ENCODE measurements at regions of chr9 and their contacts with region 1.

Region 1: GRCh38 chr9:96217754-96218693 is 84.0 kb downstream of the HSD17B3 start:
- DNase-seq: peak; percentile 79
- H3K4me3 ChIP-seq: peak overlapping the region; percentile 39
- H3K27ac ChIP-seq: peak overlapping the region; percentile 44
- H3K4me1 ChIP-seq: peaks cover 8% of the 10 kb centered on the region
- H3K27me3 ChIP-seq: no peaks in the 10 kb centered on the region
- CTCF ChIP-seq: peak; percentile 98

Region 2: DNA sequence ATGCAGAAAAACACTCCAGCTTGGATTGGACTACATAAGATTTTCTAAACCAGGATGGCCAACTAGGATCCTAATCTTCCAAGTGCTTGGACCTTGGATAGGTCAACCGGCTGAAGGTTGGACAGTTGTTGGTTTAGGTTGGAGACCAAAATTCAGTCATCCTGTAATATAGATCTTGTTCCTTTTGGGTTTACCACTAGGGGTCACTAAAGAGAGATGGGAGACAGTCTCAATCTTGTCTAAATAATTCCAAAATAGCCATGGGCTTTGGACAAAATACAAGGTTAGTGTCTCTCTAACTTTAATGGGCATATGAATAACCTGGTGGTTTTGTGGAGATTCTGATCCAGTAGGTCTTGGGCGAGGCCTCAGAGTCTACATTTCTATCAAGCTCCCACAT is 491.3 kb before region 1 on chr9:
- intact Hi-C with region 1: loop called (anchors 5 kb)
- DNase-seq: no peak
- H3K4me3 ChIP-seq: no peak overlapping the region
- H3K27ac ChIP-seq: no peak overlapping the region
- H3K4me1 ChIP-seq: peaks cover 3% of the 10 kb centered on the region
- H3K27me3 ChIP-seq: no peaks in the 10 kb centered on the region
- CTCF ChIP-seq: peak; percentile 54

Region 3: DNA sequence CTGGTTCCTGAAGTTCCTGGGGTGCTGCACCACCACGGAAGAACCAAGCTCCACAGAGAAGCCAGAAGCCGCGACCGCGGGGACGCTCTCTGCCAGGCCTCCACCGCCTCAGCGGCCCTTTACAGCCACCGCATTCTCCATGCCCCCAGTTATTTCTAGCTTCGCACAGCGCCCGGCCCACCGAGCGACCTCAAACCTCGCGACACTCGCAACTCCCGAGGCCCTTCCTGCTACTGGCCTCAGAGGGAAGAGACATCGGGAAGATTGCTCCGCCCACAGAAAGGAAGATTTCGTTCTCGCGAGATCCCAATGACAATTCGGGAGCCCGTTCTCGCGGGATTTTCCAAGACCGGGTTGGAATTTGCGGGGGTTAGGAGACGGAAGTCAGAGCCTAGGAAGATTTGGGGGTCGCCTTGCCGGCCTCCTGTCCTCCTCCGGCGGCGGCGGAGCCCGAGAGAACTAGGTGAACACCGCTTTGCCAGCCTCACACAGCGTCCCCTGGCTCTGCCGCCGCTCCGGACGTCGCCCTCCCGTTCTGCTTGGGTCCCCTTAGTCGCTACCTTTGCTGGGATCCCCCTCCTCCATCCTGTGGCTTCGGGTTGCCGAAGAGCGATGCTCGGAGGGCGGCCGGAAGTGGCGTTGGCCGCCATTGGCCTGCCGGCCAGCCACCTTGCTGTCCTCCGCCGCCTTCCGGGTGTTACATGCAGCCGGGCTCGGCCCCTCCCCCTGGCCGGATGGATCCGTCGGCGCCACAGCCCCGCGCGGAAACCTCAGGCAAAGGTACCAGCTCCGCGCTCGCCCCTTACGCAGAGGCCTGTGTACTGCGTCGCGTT is 342.5 kb before region 1 on chr9 and contains the start of gene ERCC6L2:
- intact Hi-C with region 1: no loop called
- DNase-seq: peak; percentile 95
- H3K4me3 ChIP-seq: no peak within 1 kb of the TSS
- H3K27ac ChIP-seq: no peak within 1 kb of the TSS
- H3K4me1 ChIP-seq: peaks cover 5% of the 10 kb centered on the region
- H3K27me3 ChIP-seq: no peaks in the 10 kb centered on the region
- CTCF ChIP-seq: no peak
- total RNA-seq, gene ERCC6L2: 21.5 to 36.4 TPM

Region 4: DNA sequence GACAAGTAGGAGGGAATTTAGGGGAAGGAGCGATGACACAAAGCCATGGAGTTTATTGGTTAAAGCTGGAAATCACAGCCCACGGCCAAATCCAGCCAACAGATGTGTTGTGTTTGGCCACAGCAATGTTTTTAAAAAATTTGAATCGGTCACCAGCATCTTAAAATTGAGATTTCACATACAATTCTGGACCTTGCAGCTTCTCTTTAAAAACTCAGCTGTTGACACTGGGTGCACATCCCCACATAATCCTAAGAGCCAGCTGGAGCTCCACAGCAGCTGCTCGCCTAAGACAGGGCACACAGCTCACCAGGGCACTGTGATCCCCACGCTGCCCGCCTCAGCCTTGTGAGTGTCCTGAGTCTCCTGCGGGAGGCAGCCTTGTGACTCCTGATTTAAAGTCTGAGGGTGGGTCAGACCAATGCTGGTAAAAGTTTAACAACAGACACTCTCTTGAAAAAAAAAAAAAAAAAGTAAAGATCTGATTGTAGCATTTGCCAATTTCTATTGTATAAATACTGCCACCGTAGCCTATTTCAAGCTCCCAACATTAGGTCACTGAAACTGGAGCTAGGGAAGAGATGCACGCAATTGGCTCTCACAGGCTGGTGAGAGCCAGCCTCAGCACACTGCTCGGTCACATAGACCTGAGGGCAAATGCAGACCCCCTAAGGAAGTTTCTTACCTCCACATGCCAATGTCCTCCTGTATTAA is 40.9 kb before region 1 on chr9:
- intact Hi-C with region 1: loop called (anchors 5 kb)
- DNase-seq: peak; percentile 58
- H3K4me3 ChIP-seq: no peak overlapping the region
- H3K27ac ChIP-seq: peak overlapping the region; percentile 10
- H3K4me1 ChIP-seq: peaks cover 5% of the 10 kb centered on the region
- H3K27me3 ChIP-seq: no peaks in the 10 kb centered on the region
- CTCF ChIP-seq: no peak

Measured in colonic mucosa (tissue), 4 donors.